Caco-2 (cell line): ENCODE measurements at regions of chr13 and their contacts with region 1.

Region 1: DNA sequence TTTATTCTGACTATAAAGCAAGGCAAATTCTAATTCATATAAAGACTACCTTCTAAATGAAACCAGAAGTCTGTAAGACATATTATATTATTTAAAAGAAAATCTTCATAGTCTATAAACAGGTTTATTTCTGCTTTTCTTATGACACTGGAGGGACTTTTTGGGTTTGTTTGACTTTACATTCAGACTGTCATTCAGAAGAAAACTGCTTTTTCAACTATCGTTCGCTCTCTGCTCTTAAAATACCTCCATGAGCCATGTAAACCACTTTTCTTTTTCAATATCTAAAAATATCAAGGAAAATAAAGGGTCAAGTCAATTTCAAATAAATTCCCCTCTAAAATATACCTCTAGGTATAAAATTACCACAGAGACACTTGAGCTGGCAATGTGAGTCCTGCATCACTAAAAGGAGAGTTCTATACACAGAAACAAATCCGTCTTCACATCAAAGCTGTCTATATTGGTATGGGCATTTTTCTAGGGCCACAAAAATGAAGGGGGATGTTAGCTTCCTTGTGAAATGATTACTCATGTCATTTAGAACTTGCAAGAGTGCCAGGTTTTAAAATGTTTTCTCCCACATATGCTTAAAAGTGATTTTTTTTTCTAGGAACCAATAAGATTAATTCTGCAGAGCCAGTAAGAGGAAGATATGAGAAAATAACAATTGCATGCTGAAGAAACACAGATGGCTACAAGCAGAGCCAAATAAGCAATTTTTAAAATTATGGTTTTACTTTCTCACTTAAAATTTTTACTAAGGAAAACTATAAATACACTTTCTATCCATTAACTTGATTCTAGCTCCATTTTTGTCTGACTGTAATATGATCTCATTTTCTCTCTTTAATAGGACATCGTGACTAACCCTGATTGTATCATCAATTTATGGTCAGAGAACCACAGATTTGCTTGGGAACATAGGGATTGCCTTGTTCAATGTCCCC is 181.8 kb downstream of the TBC1D4 start:
- DNase-seq: no peak
- H3K4me3 ChIP-seq: no peak overlapping the region
- H3K4me3 Mint-ChIP-seq: peak overlapping the region; percentile 54
- H3K27ac Mint-ChIP-seq: peak overlapping the region; percentile 89
- H3K4me1 ChIP-seq: peaks cover 93% of the 10 kb centered on the region
- H3K4me1 Mint-ChIP-seq: peaks cover 60% of the 10 kb centered on the region
- H3K27me3 ChIP-seq: no peaks in the 10 kb centered on the region
- H3K27me3 Mint-ChIP-seq: no peaks in the 10 kb centered on the region
- CTCF ChIP-seq: no peak

Region 2: DNA sequence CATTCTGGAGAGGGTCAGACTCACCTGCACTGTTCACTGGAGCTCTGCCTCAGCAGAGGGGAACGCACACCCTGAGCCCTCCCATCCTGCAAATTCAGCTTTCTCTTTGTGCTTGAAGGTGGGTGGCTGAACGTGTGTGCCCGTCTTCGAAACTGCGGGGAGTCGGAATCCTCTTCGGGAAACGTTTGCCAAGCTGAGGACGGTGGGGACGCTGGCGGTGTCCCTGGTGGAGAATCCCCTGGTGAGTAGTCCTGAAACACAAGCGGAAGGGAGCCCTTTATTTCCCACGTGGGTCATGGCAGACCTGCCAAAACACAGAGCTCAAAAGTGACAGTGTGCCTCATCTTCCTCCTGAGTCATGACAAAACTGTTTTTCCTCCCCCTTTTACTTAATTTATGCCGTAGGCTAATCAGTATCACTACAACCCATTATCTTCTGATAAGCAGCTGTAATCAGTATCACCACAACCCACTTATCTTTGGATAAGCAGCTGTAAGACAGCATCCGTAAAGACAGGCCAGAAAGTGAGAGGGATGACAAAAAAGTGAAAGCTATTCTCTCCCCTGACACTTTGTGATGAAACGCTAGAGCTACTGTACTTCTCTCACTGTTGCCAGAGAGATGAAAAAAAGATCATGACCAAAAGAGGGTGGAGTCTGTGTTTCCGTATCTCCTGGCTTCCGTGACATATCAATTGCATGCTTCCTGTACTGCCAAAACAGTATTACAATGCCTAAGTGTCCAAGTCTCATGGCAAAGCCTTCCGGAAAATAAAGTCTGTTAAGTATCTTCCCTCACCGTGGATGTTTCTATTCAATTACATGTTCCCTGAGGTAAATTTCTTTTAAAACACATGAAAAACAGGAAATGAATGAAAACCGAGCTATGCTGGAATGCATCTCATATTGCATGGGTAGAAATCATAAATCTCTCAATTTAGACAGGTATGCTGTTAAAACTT is 26.3 kb after region 1 on chr13:
- CTCF ChIA-PET with region 1: no interaction called
- POLR2A ChIA-PET with region 1: no interaction called
- intact Hi-C with region 1: loop called (anchors 2 kb)
- DNase-seq: no peak
- H3K4me3 ChIP-seq: no peak overlapping the region
- H3K4me3 Mint-ChIP-seq: peak overlapping the region; percentile 62
- H3K27ac Mint-ChIP-seq: peak overlapping the region; percentile 58
- H3K4me1 ChIP-seq: peaks cover 77% of the 10 kb centered on the region
- H3K4me1 Mint-ChIP-seq: peaks cover 48% of the 10 kb centered on the region
- H3K27me3 ChIP-seq: no peaks in the 10 kb centered on the region
- H3K27me3 Mint-ChIP-seq: no peaks in the 10 kb centered on the region
- CTCF ChIP-seq: no peak

Region 3: DNA sequence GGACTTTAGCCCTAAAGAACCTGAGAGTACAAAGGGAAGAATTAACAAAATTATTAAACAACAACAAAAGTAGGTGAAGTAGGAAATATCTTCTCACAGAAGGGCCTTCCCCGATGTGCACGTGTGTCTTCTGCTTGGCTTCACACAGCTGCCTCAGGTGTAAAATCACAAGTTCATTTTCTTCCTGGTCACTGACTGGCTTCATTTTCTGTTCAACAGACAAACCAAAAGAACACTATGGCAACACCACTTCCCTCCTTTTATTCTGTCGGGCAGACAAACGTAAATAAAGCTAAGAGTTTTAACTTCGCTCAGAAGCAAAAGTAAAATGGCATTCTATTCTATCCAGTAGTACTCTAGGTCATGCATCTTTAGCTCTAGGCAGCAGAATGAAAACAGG is 40.8 kb after region 1 on chr13:
- CTCF ChIA-PET with region 1: no interaction called
- POLR2A ChIA-PET with region 1: no interaction called
- intact Hi-C with region 1: loop called (anchors 2 kb)
- DNase-seq: no peak
- H3K4me3 ChIP-seq: no peak overlapping the region
- H3K4me3 Mint-ChIP-seq: no peak overlapping the region
- H3K27ac Mint-ChIP-seq: peak overlapping the region; percentile 59
- H3K4me1 ChIP-seq: peaks cover 33% of the 10 kb centered on the region
- H3K4me1 Mint-ChIP-seq: peaks cover 33% of the 10 kb centered on the region
- H3K27me3 ChIP-seq: no peaks in the 10 kb centered on the region
- H3K27me3 Mint-ChIP-seq: no peaks in the 10 kb centered on the region
- CTCF ChIP-seq: no peak

Region 4: GRCh38 chr13:75365724-75366173 is 65.6 kb after region 1 on chr13:
- CTCF ChIA-PET with region 1: no interaction called
- POLR2A ChIA-PET with region 1: no interaction called
- intact Hi-C with region 1: loop called (anchors 2 kb)
- DNase-seq: no peak
- H3K4me3 ChIP-seq: no peak overlapping the region
- H3K4me3 Mint-ChIP-seq: no peak overlapping the region
- H3K27ac Mint-ChIP-seq: peak overlapping the region; percentile 26
- H3K4me1 ChIP-seq: peaks cover 84% of the 10 kb centered on the region
- H3K4me1 Mint-ChIP-seq: peaks cover 57% of the 10 kb centered on the region
- H3K27me3 ChIP-seq: no peaks in the 10 kb centered on the region; the same call in 1 of the 2 replicates
- H3K27me3 Mint-ChIP-seq: no peaks in the 10 kb centered on the region
- CTCF ChIP-seq: no peak

Region 5: DNA sequence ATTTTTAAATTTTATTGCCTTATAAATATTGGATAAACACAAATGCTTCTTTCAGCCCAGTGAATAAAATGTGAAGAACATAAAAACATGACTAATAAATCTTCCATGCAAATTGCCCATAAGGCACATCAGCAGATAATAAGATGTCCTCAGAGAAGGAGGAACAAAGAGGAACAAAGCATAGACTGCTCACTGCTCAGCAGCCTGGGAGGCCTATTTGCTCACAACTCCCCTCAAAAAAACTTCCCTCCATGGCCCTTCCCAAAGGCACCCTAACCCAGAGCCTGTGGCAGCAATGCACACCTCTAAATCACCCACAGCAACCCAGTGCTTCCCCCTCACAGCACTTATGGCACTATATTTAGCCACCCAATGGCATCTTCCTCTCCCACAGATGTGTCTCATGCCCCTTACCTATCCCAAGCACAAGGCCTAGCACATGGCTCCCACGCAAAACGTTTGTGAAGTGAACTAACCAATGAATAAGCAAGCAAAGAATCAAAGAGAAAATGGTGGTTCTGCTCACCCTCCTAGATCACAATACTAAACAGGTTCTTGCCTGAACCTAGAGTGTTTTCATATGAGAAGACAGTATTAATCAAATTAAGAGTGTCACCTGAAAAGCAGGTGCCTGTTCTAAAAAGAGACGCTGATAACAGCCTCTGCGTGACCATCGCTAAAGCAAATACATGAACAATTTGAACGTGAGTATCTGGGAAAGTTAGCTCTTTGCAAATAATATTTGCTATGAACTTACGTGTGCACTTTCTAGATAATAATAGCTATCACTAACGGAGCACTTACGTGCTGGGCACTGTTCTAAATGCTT is 84.9 kb after region 1 on chr13:
- CTCF ChIA-PET with region 1: interaction called, 3 read pairs
- POLR2A ChIA-PET with region 1: no interaction called
- intact Hi-C with region 1: loop called (anchors 1 kb)
- DNase-seq: peak; percentile 70 to 77
- H3K4me3 ChIP-seq: peak overlapping the region; percentile 6
- H3K4me3 Mint-ChIP-seq: peak overlapping the region; percentile 67
- H3K27ac Mint-ChIP-seq: peak overlapping the region; percentile 93
- H3K4me1 ChIP-seq: peaks cover 76% of the 10 kb centered on the region
- H3K4me1 Mint-ChIP-seq: peaks cover 44% of the 10 kb centered on the region
- H3K27me3 ChIP-seq: no peaks in the 10 kb centered on the region
- H3K27me3 Mint-ChIP-seq: no peaks in the 10 kb centered on the region
- CTCF ChIP-seq: no peak

Region 6: GRCh38 chr13:75549262-75550158 is 249.3 kb after region 1 on chr13 and contains the start of gene UCHL3:
- CTCF ChIA-PET with region 1: no interaction called
- POLR2A ChIA-PET with region 1: no interaction called
- intact Hi-C with region 1: loop called (anchors 5 kb)
- DNase-seq: peak; percentile 97 to 99
- H3K4me3 ChIP-seq: peak within 1 kb of the TSS; percentile 85
- H3K4me3 Mint-ChIP-seq: peak within 1 kb of the TSS; percentile 91
- H3K27ac Mint-ChIP-seq: peak within 1 kb of the TSS; percentile 85
- H3K4me1 ChIP-seq: peaks cover 9% of the 10 kb centered on the region; the same call in 1 of the 2 replicates
- H3K4me1 Mint-ChIP-seq: peaks cover 38% of the 10 kb centered on the region
- H3K27me3 ChIP-seq: no peaks in the 10 kb centered on the region
- H3K27me3 Mint-ChIP-seq: no peaks in the 10 kb centered on the region
- CTCF ChIP-seq: peak; percentile 90 to 99
- total RNA-seq, gene UCHL3: 113 and 122 TPM in 2 replicates